CD8-positive, alpha-beta T cell (primary cell): ENCODE measurements at regions of chr12 and their contacts with region 1.

Region 1: DNA sequence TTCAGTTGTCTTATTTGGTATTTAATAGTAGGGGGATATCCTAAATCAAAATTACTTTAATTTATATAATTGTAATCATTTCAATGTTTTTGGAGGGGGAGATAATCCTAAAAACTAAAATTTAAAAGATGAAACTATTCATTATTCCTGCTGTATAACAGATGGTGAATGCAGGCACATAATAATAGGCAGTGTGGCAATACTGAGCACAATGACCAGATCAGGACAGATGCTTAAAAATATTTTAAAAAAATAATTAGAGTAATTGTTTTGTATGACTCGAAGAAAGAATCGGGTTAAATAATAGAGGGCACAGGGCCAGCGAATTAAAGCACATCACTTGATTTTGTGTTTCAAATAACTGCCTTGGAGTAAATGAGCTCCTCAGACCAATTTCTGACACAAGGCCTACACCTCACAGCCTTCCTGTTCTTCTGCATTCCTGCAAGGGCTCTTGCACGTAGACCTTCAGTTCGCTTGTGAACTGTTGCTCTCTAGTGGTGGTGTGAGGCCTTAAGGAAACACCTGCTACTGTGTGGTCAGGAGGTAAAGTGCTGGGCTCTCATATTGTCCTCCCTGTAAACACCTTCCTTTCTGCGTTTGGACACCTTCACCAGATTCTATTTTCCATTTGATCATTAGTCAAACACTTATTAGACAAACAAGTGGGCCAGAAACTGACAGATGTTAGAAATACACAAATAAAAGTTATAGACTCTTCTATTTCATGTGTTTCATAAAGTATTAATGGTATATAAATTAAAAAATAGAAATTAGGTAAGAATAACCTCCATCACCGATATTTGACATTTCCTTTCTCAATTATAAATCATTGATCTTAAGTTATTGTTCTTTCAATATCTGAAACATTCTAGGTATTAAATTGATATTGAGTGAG is 29.3 kb upstream of the KLRF1 start:
- DNase-seq: peak; percentile 37 to 91 (median 67)
- ATAC-seq: peak; percentile 95
- H3K4me3 ChIP-seq: no peak overlapping the region
- H3K4me3 Mint-ChIP-seq: no peak overlapping the region
- H3K27ac ChIP-seq: no peak overlapping the region
- H3K27ac Mint-ChIP-seq: peak overlapping the region; percentile 46
- H3K4me1 ChIP-seq: peaks cover 49% of the 10 kb centered on the region
- H3K4me1 Mint-ChIP-seq: peaks cover 45% of the 10 kb centered on the region
- H3K27me3 ChIP-seq: no peaks in the 10 kb centered on the region
- H3K27me3 Mint-ChIP-seq: no peaks in the 10 kb centered on the region
- CTCF ChIP-seq: peak; percentile 86

Region 2: DNA sequence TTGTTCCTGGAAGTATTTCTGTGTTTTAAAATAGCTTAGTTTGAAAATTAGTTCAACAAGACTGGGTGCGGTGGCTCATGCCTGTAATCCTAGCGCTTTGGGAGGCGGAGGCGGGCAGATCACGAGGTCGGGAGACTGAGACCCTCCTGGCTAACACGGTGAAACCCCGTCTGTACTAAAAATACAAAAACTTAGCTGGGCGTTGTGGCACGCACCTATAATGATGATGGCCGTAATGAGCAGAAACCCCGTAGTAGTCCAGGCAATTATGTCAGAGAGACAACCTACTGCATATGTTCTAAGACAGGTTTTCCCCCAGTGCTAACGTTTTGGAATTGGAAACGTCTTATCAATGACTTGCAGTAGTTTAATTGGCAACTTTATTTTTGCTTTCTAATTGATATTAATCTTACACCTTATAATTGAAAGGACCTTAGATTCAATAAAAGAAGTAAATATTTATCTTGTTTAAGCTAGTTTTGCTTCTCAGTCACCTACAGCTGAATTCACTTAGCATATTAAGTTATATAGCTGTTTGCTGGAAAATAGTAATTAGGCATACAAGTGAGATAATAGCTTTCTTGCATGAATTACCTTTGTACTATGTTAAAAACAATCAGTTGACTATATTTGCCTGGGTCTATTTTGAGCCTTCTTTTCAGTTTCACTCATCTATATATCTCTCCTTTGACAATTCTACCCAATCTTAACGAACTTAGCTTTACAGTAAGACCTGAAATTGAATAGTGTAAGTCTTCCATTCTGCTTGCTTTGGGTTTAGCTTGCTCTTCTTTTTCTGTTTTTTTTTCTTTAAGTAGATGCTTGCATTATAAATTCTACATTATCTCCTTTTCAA is 80.7 kb before region 1 on chr12:
- CTCF ChIA-PET with region 1: no interaction called
- POLR2A ChIA-PET with region 1: no interaction called
- intact Hi-C with region 1: no loop called
- DNase-seq: no peak
- ATAC-seq: no peak
- H3K4me3 ChIP-seq: no peak overlapping the region
- H3K4me3 Mint-ChIP-seq: no peak overlapping the region
- H3K27ac ChIP-seq: no peak overlapping the region
- H3K27ac Mint-ChIP-seq: no peak overlapping the region
- H3K4me1 ChIP-seq: no peaks in the 10 kb centered on the region
- H3K4me1 Mint-ChIP-seq: peaks cover 12% of the 10 kb centered on the region
- H3K27me3 ChIP-seq: no peaks in the 10 kb centered on the region
- H3K27me3 Mint-ChIP-seq: no peaks in the 10 kb centered on the region
- CTCF ChIP-seq: no peak

Region 3: GRCh38 chr12:9760699-9761418 is 37.1 kb before region 1 on chr12 and contains the start of gene CD69:
- CTCF ChIA-PET with region 1: interaction called, 483 read pairs
- POLR2A ChIA-PET with region 1: interaction called, 22 read pairs
- intact Hi-C with region 1: no loop called
- DNase-seq: peak; percentile 60 to 96 (median 77)
- ATAC-seq: peak; percentile 53
- H3K4me3 ChIP-seq: peak within 1 kb of the TSS; percentile 79
- H3K4me3 Mint-ChIP-seq: peak within 1 kb of the TSS; percentile 100
- H3K27ac ChIP-seq: peak within 1 kb of the TSS; percentile 97 to 98
- H3K27ac Mint-ChIP-seq: peak within 1 kb of the TSS; percentile 96
- H3K4me1 ChIP-seq: peaks cover 51% of the 10 kb centered on the region
- H3K4me1 Mint-ChIP-seq: peaks cover 64% of the 10 kb centered on the region
- H3K27me3 ChIP-seq: no peaks in the 10 kb centered on the region
- H3K27me3 Mint-ChIP-seq: no peaks in the 10 kb centered on the region
- CTCF ChIP-seq: no peak
- total RNA-seq, gene CD69: 502 to 504 TPM

Region 4: GRCh38 chr12:9773216-9773877 is 24.6 kb before region 1 on chr12:
- CTCF ChIA-PET with region 1: interaction called, 12 read pairs
- POLR2A ChIA-PET with region 1: interaction called, 3 read pairs
- intact Hi-C with region 1: loop called (anchors 1 to 2 kb)
- DNase-seq: peak in 1 of 9 experiments; percentile 60
- ATAC-seq: peak; percentile 71
- H3K4me3 ChIP-seq: no peak overlapping the region
- H3K4me3 Mint-ChIP-seq: peak overlapping the region; percentile 60
- H3K27ac ChIP-seq: peak overlapping the region in 1 of 2 experiments; percentile 3
- H3K27ac Mint-ChIP-seq: peak overlapping the region; percentile 70
- H3K4me1 ChIP-seq: peaks cover 39% of the 10 kb centered on the region
- H3K4me1 Mint-ChIP-seq: peaks cover 80% of the 10 kb centered on the region
- H3K27me3 ChIP-seq: no peaks in the 10 kb centered on the region
- H3K27me3 Mint-ChIP-seq: no peaks in the 10 kb centered on the region
- CTCF ChIP-seq: no peak

Region 5: DNA sequence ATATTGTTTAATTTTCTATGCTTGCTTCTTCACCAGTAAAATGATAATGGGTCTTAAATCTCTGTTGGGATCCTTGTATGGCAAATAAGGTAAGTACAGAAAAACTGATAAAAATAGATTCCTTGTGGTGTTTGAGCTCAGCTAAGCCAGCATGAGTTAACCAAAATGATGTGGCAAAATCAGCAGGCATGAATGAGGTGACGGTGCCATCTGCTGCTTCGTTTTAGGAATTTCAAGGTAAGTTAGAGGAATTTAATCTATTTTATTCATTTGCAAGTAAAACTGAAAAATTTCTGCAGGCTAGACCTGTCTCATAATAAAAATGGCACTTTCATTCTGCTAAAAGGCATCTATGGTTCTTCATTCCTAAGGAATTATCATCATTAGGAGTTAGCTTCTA is 342.0 kb after region 1 on chr12:
- CTCF ChIA-PET with region 1: interaction called, 3 read pairs
- POLR2A ChIA-PET with region 1: no interaction called
- intact Hi-C with region 1: loop called in 1 of 2 experiments (anchors 1 kb)
- DNase-seq: peak in 6 of 9 experiments; percentile 9 to 69 (median 46)
- ATAC-seq: peak; percentile 51
- H3K4me3 ChIP-seq: no peak overlapping the region
- H3K4me3 Mint-ChIP-seq: no peak overlapping the region
- H3K27ac ChIP-seq: no peak overlapping the region
- H3K27ac Mint-ChIP-seq: no peak overlapping the region
- H3K4me1 ChIP-seq: no peaks in the 10 kb centered on the region
- H3K4me1 Mint-ChIP-seq: peaks cover 2% of the 10 kb centered on the region
- H3K27me3 ChIP-seq: peaks cover 0 to 4% of the 10 kb centered on the region in 2 experiments
- H3K27me3 Mint-ChIP-seq: peaks cover 6% of the 10 kb centered on the region
- CTCF ChIP-seq: peak; percentile 68